Activated naive CD4-positive, alpha-beta T cell treated with anti-CD3 and anti-CD28 coated beads for 36 hours (primary cell): ENCODE measurements at regions of chr4 and their contacts with region 1.

Region 1: DNA sequence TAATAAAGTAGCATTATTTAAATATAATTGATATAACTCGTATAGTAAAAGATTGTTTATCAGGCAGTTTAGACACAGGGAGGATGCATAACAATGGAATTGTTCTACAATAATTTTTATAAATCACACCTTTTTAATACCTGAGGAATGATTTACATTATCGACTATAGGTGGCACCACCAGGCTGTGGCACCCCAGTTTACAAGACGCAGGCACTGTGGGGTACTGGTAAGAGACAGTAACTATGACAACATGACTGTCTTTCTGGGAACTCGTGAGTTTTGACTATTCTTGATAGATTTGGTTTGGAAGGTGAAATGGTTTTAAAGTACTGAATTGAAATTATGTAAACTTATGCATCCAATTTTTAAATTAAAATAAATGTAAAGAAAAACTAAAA is 27.1 kb upstream of the STBD1 start:
- DNase-seq: peak; percentile 24
- H3K4me3 Mint-ChIP-seq: no peak overlapping the region
- H3K27ac Mint-ChIP-seq: no peak overlapping the region
- H3K4me1 Mint-ChIP-seq: no peaks in the 10 kb centered on the region
- H3K27me3 Mint-ChIP-seq: peaks cover 5% of the 10 kb centered on the region

Region 2: GRCh38 chr4:76504613-76505465 is 225.4 kb after region 1 on chr4:
- CTCF ChIA-PET with region 1: interaction called, 3 read pairs
- intact Hi-C with region 1: loop called (anchors 2 kb)
- DNase-seq: no peak
- H3K4me3 Mint-ChIP-seq: no peak overlapping the region
- H3K27ac Mint-ChIP-seq: no peak overlapping the region
- H3K4me1 Mint-ChIP-seq: no peaks in the 10 kb centered on the region
- H3K27me3 Mint-ChIP-seq: peaks cover 13% of the 10 kb centered on the region